HEK293 (cell line): ENCODE measurements at regions of chr11 and their contacts with region 1.

Region 1: DNA sequence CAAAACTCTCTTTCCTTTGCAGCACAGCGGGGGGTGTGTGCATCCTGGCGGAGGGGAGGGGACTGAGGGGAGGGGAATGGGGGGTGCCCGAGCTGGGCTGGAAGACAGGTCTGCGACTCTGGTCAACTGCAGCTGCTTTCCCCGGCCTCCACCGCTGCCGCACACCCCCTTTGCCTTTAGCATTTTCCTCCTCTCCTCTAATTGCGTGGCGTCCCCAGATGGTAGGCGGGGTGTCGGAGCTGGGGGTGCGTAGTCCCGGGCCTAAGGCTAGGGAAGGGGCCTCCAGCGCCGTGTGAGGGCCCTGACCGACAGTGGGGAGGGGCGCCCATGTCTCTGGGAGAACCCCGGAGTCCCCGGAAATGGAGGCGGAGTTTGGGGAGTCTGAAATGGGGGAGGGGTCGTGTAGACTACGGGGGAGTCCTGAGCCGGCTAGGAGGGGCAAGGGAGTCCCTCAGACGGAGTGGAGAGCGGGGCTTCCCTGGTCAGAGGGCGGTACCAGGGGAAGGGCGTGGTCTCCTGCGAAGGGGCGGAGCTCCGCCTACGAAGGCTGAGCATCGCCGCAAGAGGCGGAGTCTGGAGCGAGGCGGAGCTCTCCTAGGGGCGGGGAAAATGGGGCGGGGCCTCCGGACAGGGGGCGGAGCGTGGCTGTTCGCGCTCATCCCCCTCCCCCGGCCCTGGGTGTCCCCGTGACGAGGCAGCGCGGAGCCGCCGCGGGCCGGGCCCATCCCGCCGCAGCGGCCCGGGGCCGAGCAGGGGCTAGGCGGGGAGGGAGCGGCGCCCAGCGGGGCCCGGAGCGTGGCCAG is at the start of gene PELI3:
- H3K4me3 ChIP-seq: peak within 1 kb of the TSS; percentile 53
- H3K27ac ChIP-seq: no peak within 1 kb of the TSS; the same call in 1 of the 2 replicates
- H3K4me1 ChIP-seq: no peaks in the 10 kb centered on the region
- CTCF ChIP-seq: no peak

Region 2: GRCh38 chr11:66408488-66409214 is 57.8 kb before region 1 on chr11:
- CTCF ChIA-PET with region 1: interaction called, 17 read pairs
- POLR2A ChIA-PET with region 1: interaction called, 3 read pairs
- H3K4me3 ChIP-seq: peak overlapping the region; percentile 22
- H3K27ac ChIP-seq: no peak overlapping the region
- H3K4me1 ChIP-seq: no peaks in the 10 kb centered on the region
- CTCF ChIP-seq: peak; percentile 96

Region 3: GRCh38 chr11:66429983-66430602 is 36.3 kb before region 1 on chr11:
- CTCF ChIA-PET with region 1: interaction called, 10 read pairs
- POLR2A ChIA-PET with region 1: no interaction called
- H3K4me3 ChIP-seq: no peak overlapping the region
- H3K27ac ChIP-seq: no peak overlapping the region
- H3K4me1 ChIP-seq: no peaks in the 10 kb centered on the region
- CTCF ChIP-seq: peak; percentile 58

Region 4: GRCh38 chr11:66438504-66439466 is 27.6 kb before region 1 on chr11 and contains the start of gene MRPL11:
- CTCF ChIA-PET with region 1: interaction called, 4 read pairs
- POLR2A ChIA-PET with region 1: interaction called, 22 read pairs
- H3K4me3 ChIP-seq: peak within 1 kb of the TSS; percentile 68
- H3K27ac ChIP-seq: peak within 1 kb of the TSS; percentile 68
- H3K4me1 ChIP-seq: no peaks in the 10 kb centered on the region
- CTCF ChIP-seq: peak; percentile 71

Region 5: DNA sequence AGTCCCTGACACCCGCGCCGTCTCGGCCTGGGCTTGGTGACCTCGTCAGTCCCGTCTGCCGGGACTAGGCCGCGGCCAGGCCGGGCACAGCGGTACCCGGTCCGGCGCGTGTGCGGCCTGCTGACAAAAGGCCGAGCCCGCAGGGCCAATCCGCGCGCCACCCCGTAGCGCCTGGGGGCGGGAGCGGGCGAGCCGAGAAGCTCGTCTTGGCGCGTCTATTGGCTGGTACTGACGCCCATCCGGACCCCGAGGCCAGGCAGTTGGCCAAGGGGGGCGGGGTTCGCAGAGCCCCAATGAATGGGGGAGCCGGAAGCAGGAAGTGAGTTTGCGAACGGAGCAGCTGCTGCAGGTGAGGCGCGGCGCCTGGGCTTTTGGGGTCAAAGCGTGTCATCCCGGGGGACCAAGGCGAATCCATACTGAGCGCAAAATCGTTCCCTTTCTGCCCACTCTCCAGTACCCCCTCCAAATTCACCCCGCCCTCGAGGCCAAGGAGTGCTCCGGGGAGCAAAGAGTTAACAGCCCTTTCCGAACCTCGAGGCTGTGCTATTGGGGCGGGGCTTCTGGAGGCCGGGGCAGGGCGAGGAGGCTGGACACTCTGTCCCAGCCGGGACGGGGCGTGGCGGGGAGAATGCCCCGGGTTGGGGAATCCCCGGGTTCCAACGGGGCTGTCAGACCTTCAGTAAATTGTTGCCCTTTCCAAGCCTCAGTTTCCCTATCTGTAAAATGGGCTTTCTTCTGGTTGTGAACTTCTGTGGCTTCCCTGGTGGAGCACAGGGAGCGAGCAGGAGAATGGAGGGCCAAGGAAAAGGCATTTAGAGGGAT is 13.9 kb after region 1 on chr11 and contains the start of gene DPP3:
- CTCF ChIA-PET with region 1: interaction called, 20 read pairs
- POLR2A ChIA-PET with region 1: interaction called, 64 read pairs
- H3K4me3 ChIP-seq: peak within 1 kb of the TSS; percentile 73
- H3K27ac ChIP-seq: peak within 1 kb of the TSS; percentile 77
- H3K4me1 ChIP-seq: no peaks in the 10 kb centered on the region
- CTCF ChIP-seq: no peak

Region 6: DNA sequence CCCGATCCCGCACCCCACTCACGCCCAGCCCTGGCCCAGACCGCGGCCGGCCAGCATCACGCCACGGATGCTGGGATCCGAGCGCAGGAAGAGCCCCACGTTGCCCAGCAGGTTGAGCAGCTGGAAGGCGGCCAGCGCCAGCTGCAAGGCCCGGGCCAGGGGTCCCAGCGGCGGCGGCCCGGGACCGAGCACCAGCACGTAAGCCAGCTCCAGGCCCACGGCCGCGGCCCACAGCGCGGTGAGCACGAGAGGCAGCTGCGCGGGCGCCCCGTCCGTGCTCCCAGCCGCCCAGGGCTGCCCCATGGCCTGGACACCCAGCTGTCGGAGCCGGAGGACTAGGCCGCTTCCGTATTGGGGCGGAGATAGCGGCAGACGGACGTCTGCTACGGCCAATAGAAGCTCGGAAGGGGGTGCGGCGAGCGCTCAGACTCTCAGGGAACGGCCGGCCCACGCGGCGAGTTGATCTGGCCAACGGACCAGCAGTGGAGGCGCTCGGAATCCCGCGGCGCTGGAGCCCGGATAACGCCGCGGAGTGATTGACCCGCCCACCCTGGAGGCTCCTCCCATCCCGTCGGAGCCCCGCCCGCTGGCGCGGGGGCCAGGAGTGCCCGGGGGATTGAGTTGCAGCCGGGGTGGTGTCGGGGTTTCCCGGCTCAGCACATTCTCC is 79.4 kb after region 1 on chr11 and contains the start of gene ZDHHC24:
- CTCF ChIA-PET with region 1: no interaction called
- POLR2A ChIA-PET with region 1: interaction called, 10 read pairs
- H3K4me3 ChIP-seq: peak within 1 kb of the TSS; percentile 73
- H3K27ac ChIP-seq: peak within 1 kb of the TSS; percentile 65; the same call in 1 of the 2 replicates
- H3K4me1 ChIP-seq: no peaks in the 10 kb centered on the region
- CTCF ChIP-seq: no peak

Region 7: DNA sequence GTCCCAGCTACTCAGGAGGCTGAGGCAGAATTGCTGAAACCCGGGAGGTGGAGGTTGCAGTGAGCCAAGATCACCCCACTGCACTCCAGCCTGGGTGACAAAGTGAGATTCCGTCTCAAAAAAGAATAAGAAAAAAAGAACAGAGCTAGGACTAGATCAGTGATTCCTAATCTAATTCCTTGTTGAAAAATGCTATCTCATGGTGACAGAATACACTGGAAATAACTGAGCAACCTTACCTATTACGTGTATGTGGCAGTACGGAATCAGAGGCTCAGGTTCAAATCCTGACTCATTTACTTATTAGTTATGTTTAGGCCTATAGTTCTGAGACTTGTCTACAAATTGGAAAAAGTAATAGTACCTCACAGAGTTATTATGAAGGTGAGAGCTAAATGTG is 357.3 kb after region 1 on chr11:
- CTCF ChIA-PET with region 1: no interaction called
- POLR2A ChIA-PET with region 1: no interaction called
- H3K4me3 ChIP-seq: no peak overlapping the region
- H3K27ac ChIP-seq: no peak overlapping the region
- H3K4me1 ChIP-seq: no peaks in the 10 kb centered on the region
- CTCF ChIP-seq: no peak